ENCODE measurements at regions of chr20 and their contacts with region 1.

Region 1: GRCh38 chr20:44885392-44886265 is at the start of gene YWHAB:
- DNase-seq: peak; percentile 94 to 97 (median 95)
- H3K4me3 ChIP-seq: peak within 1 kb of the TSS; percentile 82 to 87
- H3K4me3 Mint-ChIP-seq: peak within 1 kb of the TSS; percentile 92 to 98 (median 97)
- H3K27ac ChIP-seq: peak within 1 kb of the TSS; percentile 85
- H3K27ac Mint-ChIP-seq: peak within 1 kb of the TSS; percentile 95 to 98 (median 97)
- H3K4me1 ChIP-seq: peaks cover 55% of the 10 kb centered on the region
- H3K4me1 Mint-ChIP-seq: peaks cover 45 to 76% (median 56%) of the 10 kb centered on the region in 4 donors
- H3K27me3 ChIP-seq: no peaks in the 10 kb centered on the region
- H3K27me3 Mint-ChIP-seq: no peaks in the 10 kb centered on the region
- total RNA-seq, gene YWHAB: 245 to 262 TPM

Region 2: GRCh38 chr20:44210422-44211176 is 675.0 kb before region 1 on chr20 and contains the start of gene OSER1:
- CTCF ChIA-PET with region 1: no interaction called
- POLR2A ChIA-PET with region 1: no interaction called
- intact Hi-C with region 1: loop called (anchors 1 kb)
- DNase-seq: peak; percentile 99
- H3K4me3 ChIP-seq: peak within 1 kb of the TSS; percentile 77 to 78
- H3K4me3 Mint-ChIP-seq: peak within 1 kb of the TSS; percentile 85 to 99 (median 94)
- H3K27ac ChIP-seq: peak within 1 kb of the TSS; percentile 98
- H3K27ac Mint-ChIP-seq: peak within 1 kb of the TSS; percentile 90 to 100 (median 98)
- H3K4me1 ChIP-seq: peaks cover 53% of the 10 kb centered on the region
- H3K4me1 Mint-ChIP-seq: peaks cover 42 to 79% (median 56%) of the 10 kb centered on the region in 4 donors
- H3K27me3 ChIP-seq: no peaks in the 10 kb centered on the region
- H3K27me3 Mint-ChIP-seq: no peaks in the 10 kb centered on the region
- total RNA-seq, gene OSER1: 35.5 to 36.6 TPM

Region 3: GRCh38 chr20:44896583-44896982 is 11.0 kb after region 1 on chr20:
- CTCF ChIA-PET with region 1: interaction called, 4 read pairs
- POLR2A ChIA-PET with region 1: interaction called, 23 read pairs
- intact Hi-C with region 1: loop called (anchors 1 kb)
- DNase-seq: no peak
- H3K4me3 ChIP-seq: no peak overlapping the region
- H3K4me3 Mint-ChIP-seq: peak overlapping the region; percentile 27 to 78 (median 48)
- H3K27ac ChIP-seq: no peak overlapping the region
- H3K27ac Mint-ChIP-seq: peak overlapping the region; percentile 9 to 94 (median 84)
- H3K4me1 ChIP-seq: peaks cover 98% of the 10 kb centered on the region
- H3K4me1 Mint-ChIP-seq: peaks cover 63 to 89% (median 77%) of the 10 kb centered on the region in 4 donors
- H3K27me3 ChIP-seq: no peaks in the 10 kb centered on the region
- H3K27me3 Mint-ChIP-seq: no peaks in the 10 kb centered on the region

Region 4: GRCh38 chr20:44918761-44919160 is 33.1 kb after region 1 on chr20:
- CTCF ChIA-PET with region 1: no interaction called
- POLR2A ChIA-PET with region 1: no interaction called
- intact Hi-C with region 1: no loop called
- DNase-seq: no peak
- H3K4me3 ChIP-seq: no peak overlapping the region
- H3K4me3 Mint-ChIP-seq: no peak overlapping the region
- H3K27ac ChIP-seq: no peak overlapping the region
- H3K27ac Mint-ChIP-seq: no peak overlapping the region
- H3K4me1 ChIP-seq: no peaks in the 10 kb centered on the region
- H3K4me1 Mint-ChIP-seq: peaks cover 6 to 10% (median 9%) of the 10 kb centered on the region in 4 donors
- H3K27me3 ChIP-seq: no peaks in the 10 kb centered on the region
- H3K27me3 Mint-ChIP-seq: no peaks in the 10 kb centered on the region

Region 5: GRCh38 chr20:44960103-44960852 is 74.6 kb after region 1 on chr20 and contains the start of gene TOMM34:
- CTCF ChIA-PET with region 1: interaction called, 17 read pairs
- POLR2A ChIA-PET with region 1: interaction called, 21 read pairs
- intact Hi-C with region 1: no loop called
- DNase-seq: peak; percentile 89 to 91 (median 90)
- H3K4me3 ChIP-seq: peak within 1 kb of the TSS; percentile 54 to 67
- H3K4me3 Mint-ChIP-seq: peak within 1 kb of the TSS; percentile 94 to 100 (median 98)
- H3K27ac ChIP-seq: peak within 1 kb of the TSS; percentile 66
- H3K27ac Mint-ChIP-seq: peak within 1 kb of the TSS; percentile 84 to 99 (median 96)
- H3K4me1 ChIP-seq: peaks cover 34% of the 10 kb centered on the region
- H3K4me1 Mint-ChIP-seq: peaks cover 35 to 51% (median 38%) of the 10 kb centered on the region in 4 donors
- H3K27me3 ChIP-seq: no peaks in the 10 kb centered on the region
- H3K27me3 Mint-ChIP-seq: no peaks in the 10 kb centered on the region
- total RNA-seq, gene TOMM34: 7.6 to 8.5 TPM

Region 6: GRCh38 chr20:46689082-46689754 is 1803.6 kb after region 1 on chr20 and contains the start of gene TP53RK:
- CTCF ChIA-PET with region 1: no interaction called
- POLR2A ChIA-PET with region 1: no interaction called
- intact Hi-C with region 1: loop called (anchors 5 kb)
- DNase-seq: peak; percentile 95 to 98 (median 96)
- H3K4me3 ChIP-seq: peak within 1 kb of the TSS; percentile 59 to 92
- H3K4me3 Mint-ChIP-seq: peak within 1 kb of the TSS; percentile 95 to 100 (median 98)
- H3K27ac ChIP-seq: peak within 1 kb of the TSS; percentile 85
- H3K27ac Mint-ChIP-seq: peak within 1 kb of the TSS; percentile 84 to 100 (median 97)
- H3K4me1 ChIP-seq: peaks cover 46% of the 10 kb centered on the region
- H3K4me1 Mint-ChIP-seq: peaks cover 27 to 48% (median 41%) of the 10 kb centered on the region in 4 donors
- H3K27me3 ChIP-seq: no peaks in the 10 kb centered on the region
- H3K27me3 Mint-ChIP-seq: no peaks in the 10 kb centered on the region
- total RNA-seq, gene TP53RK: 25.7 to 29.4 TPM